ENCODE measurements at regions of chr13 and their contacts with region 1.

Region 1: DNA sequence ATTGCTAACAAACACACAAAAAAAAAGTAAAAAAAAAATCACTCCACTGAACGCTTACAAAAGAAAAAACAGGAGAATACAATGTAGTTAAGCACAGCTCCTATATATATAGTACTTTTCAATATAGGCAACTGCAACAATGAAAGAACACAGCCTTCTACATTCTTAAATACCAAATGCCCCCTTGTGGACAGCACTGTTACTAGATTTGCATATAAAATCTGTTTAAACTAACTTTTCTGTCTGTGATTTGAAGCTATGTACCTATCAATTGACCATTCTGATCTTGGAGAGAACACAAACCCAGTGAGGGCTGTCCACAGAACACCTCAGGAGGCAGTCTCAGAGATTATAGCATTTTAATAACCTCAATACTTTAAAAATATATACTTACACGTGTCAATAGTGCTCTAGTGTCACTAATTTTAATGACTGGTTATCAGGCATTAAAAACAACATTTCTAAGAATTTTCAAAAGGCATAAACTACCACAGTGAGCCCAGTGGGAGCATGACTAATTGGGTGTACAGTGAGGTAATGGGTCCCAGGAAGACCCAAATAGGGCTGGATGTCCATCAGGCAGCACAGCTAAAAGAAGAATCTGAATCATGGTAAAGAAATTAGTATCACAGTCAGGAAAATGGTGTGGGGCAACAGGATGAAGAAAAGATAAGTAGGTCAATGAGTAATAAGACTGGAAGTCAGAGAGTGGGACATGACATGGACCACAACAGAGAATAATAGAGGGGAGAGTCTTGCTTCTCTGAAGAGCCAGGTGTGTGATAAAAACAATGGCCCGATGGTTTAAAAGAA is 22.2 kb downstream of the CCDC169 start:
- DNase-seq: no peak
- ATAC-seq: peak in 1 of 2 donors; percentile 51
- H3K4me3 ChIP-seq: no peak overlapping the region
- H3K27ac ChIP-seq: no peak overlapping the region
- H3K4me1 ChIP-seq: no peaks in the 10 kb centered on the region
- H3K27me3 ChIP-seq: no peaks in the 10 kb centered on the region

Region 2: DNA sequence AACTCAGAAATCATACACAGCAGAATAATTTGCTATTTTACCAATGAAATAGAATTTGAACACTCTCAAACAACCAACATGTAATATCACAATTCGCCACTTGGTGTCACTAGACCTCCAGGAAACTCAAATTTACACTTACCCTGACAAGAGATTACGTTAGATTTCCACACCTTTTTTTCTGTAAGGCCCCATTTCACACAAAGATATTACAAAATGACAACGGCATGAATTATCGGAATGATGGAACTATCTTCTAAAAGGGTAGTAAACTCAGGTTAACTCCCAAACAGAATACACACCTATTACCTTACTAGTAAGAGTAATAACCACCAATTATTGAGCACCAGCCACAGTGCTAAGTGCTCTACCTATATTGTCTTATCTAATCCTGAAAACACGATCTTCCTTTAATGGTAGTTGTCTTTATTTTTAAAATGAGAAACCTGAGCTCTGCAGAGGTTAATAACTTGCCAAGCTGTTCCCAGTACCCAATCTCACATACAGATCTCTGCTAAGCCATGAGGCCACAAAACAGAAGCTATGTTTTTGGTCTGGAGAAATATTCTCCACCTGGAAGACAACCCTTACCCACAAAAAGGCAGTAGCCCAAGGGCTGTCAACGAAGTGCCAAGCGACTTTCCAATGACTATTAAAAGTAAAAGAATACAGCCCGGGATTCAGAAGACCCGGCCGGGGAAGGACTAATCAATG is 296.6 kb before region 1 on chr13:
- intact Hi-C with region 1: loop called (anchors 2 to 5 kb)
- DNase-seq: no peak
- ATAC-seq: peak; percentile 34 to 61
- H3K4me3 ChIP-seq: no peak overlapping the region
- H3K27ac ChIP-seq: peak overlapping the region; percentile 69
- H3K4me1 ChIP-seq: no peaks in the 10 kb centered on the region
- H3K27me3 ChIP-seq: no peaks in the 10 kb centered on the region

Region 3: GRCh38 chr13:35994131-35994966 is 281.0 kb before region 1 on chr13:
- intact Hi-C with region 1: no loop called
- DNase-seq: peak in 2 of 3 donors; percentile 59 to 77
- ATAC-seq: peak; percentile 86
- H3K4me3 ChIP-seq: no peak overlapping the region
- H3K27ac ChIP-seq: peak overlapping the region; percentile 67
- H3K4me1 ChIP-seq: peaks cover 2% of the 10 kb centered on the region
- H3K27me3 ChIP-seq: no peaks in the 10 kb centered on the region